ENCODE measurements at regions of chr19 and their contacts with region 1.

Region 1: DNA sequence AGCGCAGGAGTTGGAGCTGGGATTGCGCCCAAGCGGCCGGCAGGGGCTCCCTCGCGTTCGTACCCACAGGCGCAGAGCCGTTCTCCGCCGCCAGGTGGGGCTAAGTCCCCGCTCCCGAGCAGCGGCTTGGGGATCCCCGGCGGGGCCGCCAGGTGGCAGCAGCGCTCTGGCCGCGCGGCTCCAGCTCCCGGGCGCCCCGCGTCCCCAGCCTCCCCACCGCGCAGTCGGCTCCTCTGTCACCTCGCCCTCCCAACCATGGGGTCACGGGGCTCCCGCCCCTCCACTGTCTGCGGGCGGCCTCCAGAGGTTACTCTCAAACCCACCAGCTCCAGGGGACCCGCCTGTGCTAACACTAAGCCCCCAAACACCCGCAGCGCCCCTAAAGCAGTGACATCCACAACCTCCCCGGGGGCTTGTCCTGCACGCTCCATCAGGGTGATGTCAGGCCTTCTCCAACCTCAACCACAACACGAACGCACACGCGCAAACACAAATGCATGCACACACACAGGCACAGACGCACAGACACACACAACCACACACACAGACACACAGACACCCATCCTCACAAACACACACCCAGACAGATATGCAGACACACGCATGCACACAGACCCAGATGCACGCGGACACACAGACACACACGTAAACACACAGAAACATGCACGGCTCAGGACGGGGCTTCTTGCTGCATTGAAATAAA is 18.4 kb upstream of the KCTD15 start:
- DNase-seq: no peak
- H3K4me3 ChIP-seq: peak overlapping the region in 1 of 2 donors; percentile 9
- H3K27ac ChIP-seq: no peak overlapping the region
- H3K4me1 ChIP-seq: peaks cover 4% of the 10 kb centered on the region
- H3K27me3 ChIP-seq: no peaks in the 10 kb centered on the region
- CTCF ChIP-seq: peak; percentile 100
- POLR2A ChIP-seq: no peak

Region 2: DNA sequence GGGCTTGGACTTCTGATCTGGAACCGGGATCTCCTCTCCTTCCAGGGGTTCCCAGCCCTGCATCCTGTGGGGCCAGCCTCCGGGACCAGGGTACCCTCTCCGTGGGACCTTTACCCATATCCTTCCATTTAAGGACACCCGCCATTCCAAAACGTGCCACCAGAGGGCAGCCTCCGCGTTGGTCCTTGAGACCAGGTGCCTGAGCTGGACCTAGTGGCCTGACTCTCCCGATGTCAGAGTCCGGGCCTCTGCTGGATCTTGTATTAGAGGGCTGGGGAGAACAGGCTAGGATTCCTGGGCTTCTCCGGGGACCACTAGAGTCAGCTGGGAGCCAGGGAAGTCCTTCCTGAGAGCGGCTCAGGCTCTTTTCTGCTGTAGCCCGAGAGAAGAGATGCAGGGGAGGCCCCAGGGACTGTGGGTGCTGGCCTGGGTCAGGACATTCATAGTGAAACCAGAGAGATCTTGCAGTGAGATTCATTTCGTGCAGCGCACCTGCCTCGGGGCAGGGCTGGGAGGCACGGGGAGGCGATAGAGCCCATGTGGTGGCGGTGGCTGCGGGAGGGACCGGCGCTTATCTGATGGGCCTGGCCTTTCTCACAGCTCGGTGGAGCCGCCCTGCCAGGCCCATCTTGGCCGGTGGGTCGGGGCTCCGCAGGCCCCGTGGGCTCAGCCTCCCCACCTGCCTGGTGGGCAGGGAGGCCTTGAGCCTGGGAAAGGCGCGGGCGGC is 542.8 kb before region 1 on chr19:
- intact Hi-C with region 1: loop called (anchors 10 kb)
- DNase-seq: no peak
- H3K4me3 ChIP-seq: no peak overlapping the region
- H3K27ac ChIP-seq: no peak overlapping the region
- H3K4me1 ChIP-seq: no peaks in the 10 kb centered on the region
- H3K27me3 ChIP-seq: no peaks in the 10 kb centered on the region
- CTCF ChIP-seq: peak; percentile 74 to 85 (median 77)
- POLR2A ChIP-seq: no peak

Region 3: DNA sequence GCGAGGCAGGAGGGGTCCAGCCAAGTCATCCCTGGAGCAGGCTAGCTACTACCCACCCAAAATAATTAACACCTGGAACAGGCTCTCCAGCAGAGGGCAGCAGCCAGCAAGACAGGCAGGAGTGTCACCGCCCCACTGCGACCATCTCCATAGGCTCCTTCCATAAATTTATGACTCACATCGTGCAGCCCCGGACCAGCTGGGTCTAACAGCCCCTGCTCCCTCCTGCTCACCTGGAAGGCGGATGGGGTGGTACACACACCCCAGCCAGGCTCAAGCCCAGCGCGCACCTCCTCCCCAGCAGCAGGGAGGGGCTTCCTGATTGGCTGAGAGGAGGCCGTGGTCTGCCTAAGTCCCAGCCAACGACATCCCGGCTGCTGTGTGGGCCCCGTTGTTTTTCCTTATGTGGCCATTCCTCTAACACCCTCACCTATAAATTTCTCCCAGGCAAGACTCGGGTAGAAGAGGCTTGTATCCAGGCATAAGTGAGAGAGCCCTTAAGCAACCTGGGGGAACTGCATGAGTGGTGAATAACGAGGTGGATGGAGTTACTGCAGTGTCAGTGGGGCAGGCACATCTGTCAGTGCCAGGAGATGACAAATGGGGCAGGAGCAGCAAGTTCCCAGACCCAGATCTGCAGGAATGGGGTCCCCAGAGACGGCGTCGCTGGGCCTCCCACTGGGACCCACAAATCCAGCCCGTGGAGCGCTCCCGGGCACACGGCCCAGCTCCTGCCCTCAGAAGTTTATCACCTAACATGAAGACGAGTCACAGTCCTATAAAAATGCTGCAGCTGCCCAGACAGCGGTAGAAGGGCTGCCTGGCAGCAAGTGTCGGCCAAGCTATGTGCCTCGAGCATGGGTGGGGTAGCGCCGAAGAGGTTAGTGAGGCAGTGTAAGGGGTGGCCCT is 361.7 kb before region 1 on chr19:
- intact Hi-C with region 1: loop called (anchors 10 kb)
- DNase-seq: no peak
- H3K4me3 ChIP-seq: no peak overlapping the region
- H3K27ac ChIP-seq: no peak overlapping the region
- H3K4me1 ChIP-seq: peaks cover 12% of the 10 kb centered on the region
- H3K27me3 ChIP-seq: no peaks in the 10 kb centered on the region
- CTCF ChIP-seq: peak in 2 of 3 experiments; percentile 27 to 41
- POLR2A ChIP-seq: no peak

Region 4: DNA sequence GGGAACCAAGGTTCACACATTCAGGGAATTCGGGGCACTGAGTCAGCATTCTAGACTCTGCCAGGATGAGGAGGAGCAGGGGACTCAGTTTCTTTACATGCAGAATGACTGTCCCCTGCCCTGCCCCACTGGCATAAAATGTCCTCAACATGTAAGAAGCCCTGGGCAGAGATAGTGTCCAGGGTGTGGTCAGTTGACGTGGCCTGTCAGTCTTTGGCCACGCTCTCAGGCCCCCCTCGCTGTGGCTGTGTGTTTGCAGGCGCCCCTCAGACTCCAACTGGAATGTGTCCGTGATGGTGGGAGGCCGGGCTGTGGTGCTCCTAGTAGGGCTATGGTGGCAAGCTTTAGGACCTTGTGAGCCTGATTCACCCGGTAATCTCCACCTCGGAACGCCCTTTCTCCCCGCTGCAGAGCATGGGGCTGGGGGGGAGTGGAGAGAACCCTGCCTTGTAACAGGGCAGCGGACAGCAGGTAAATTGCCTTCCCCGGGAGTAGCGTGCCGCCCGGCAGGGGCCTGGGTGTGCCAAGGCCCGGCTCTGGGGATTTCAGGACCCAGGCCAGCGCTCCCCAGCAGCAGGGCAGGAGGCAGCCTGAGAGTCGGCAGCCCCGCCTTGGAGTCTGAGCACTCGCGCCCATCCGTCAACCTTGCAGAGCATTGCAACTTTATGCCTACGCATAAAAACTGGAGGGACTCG is 94.3 kb before region 1 on chr19:
- intact Hi-C with region 1: no loop called
- DNase-seq: no peak
- H3K4me3 ChIP-seq: no peak overlapping the region
- H3K27ac ChIP-seq: no peak overlapping the region
- H3K4me1 ChIP-seq: no peaks in the 10 kb centered on the region
- H3K27me3 ChIP-seq: no peaks in the 10 kb centered on the region
- CTCF ChIP-seq: no peak
- POLR2A ChIP-seq: no peak

Region 5: DNA sequence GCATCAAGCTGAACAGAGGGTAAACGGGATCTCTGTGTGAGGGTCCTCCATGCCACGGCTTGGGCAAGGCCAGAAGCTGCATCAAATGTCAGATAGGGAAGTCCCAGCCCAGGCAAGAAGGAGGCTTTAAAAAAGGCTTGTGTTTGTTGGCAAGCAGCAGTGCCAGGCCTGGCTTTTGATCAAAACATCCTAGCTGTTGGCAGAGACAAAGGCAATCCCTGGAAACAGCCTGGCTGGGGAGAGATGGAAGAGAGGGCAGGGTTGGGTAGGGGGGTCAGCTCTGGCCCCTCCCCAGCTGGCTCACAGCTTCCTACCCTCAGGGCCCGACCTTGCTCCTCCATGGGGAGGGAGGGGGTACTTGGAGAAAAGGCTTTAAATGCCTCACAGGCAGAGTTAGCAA is 43.3 kb before region 1 on chr19:
- intact Hi-C with region 1: no loop called
- DNase-seq: no peak
- H3K4me3 ChIP-seq: no peak overlapping the region
- H3K27ac ChIP-seq: no peak overlapping the region
- H3K4me1 ChIP-seq: no peaks in the 10 kb centered on the region
- H3K27me3 ChIP-seq: no peaks in the 10 kb centered on the region
- CTCF ChIP-seq: no peak
- POLR2A ChIP-seq: no peak

Region 6: DNA sequence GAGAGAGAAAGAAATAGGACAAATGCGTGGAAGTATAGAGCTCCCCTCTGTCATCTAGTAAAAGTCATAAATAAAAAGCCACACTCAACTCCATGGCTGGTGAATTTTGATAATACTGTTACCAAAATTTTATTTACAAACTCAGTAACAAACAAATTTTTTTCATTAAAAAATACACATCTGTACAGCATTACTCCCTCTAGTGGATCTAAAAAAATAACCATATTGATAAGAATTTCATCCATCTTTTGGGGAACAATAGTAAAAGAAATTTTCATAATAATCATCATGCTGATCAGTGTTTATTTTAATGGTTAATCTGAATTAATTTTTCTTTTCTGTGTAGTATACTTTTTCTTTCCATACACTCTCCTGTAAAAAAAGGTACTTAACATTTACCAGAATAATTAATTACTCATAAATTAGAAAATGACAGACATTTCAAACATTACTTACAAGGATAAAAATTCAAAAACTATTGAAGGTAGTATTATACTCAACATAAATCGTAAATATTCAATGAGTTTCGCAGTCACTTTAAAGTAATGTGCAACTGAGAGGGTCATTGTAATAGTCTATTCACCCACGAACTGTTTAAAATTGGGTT is 220.6 kb after region 1 on chr19:
- intact Hi-C with region 1: loop called (anchors 5 kb)
- DNase-seq: no peak
- H3K4me3 ChIP-seq: no peak overlapping the region
- H3K27ac ChIP-seq: no peak overlapping the region
- H3K4me1 ChIP-seq: no peaks in the 10 kb centered on the region
- H3K27me3 ChIP-seq: no peaks in the 10 kb centered on the region
- CTCF ChIP-seq: peak in 2 of 3 experiments; percentile 28 to 32
- POLR2A ChIP-seq: no peak

Region 7: DNA sequence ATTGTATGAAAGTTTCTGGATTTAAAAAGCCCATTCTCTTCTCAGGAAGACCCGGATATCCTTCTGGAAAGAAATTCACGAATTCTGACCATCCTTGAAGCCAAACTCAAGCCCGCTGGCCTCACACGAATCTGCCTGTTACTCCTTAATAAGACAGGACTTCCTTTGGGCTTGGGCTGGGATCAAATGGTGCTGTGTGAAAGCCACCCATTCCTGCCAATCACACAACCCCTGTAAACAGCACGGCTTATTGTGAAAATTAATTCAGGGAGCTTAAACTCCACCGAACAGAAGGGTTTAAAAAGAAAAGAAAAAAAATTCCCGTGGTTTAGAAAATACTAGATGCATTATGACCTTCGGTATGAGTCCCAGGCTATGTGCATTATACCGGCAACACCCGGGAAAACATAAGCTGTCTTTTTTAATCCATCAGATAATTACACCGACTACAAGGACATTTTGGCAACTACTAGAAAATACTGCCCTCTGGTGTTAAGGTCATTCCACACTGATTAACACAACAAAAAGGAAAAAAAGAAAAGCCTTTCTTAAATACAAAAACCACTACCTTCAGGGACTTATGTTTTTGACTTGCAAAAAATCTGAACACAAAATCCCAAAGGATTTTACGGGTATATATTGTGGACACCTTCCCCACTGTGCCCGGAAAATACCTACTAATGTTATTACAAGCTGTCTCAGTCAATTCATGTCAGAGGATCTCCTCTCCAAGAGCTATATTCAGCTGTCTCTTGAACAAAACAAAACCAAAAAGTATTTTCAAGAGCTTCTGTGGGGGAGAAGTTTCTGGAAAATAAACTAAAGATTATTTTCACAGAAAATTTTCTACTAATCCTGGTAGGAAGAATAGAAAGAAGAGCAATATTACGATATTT is 318.0 kb after region 1 on chr19:
- intact Hi-C with region 1: loop called (anchors 5 kb)
- DNase-seq: no peak
- H3K4me3 ChIP-seq: no peak overlapping the region
- H3K27ac ChIP-seq: no peak overlapping the region
- H3K4me1 ChIP-seq: peaks cover 3% of the 10 kb centered on the region
- H3K27me3 ChIP-seq: no peaks in the 10 kb centered on the region
- CTCF ChIP-seq: peak in 2 of 3 experiments; percentile 59 to 60
- POLR2A ChIP-seq: no peak